ENCODE measurements at regions of chr3 and their contacts with region 1.

Region 1: DNA sequence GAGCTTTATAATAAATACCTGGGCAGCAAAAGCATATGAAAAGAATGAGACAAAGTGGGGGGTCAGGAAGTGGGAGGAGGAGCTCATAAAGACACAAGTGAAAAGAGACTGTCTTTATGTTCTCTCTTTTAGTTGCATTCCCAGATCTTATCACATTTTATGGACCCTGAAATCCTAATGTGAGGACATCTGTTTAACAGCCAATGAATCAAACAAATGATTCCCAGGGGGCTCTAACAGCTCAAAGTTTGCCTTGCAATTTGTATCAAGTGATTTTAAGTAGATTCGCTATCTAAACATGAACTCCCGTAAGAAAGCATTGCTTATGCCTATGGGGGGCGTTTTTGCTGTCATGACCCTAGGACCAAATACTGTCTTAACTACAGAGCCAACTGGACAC is 332.3 kb upstream of the CNTN4 start:
- DNase-seq: no peak
- H3K27ac ChIP-seq: no peak overlapping the region
- CTCF ChIP-seq: no peak

Region 2: GRCh38 chr3:1214933-1215332 is 551.5 kb before region 1 on chr3:
- CTCF ChIA-PET with region 1: no interaction called
- POLR2A ChIA-PET with region 1: interaction called, 12 read pairs
- DNase-seq: no peak
- H3K27ac ChIP-seq: no peak overlapping the region
- CTCF ChIP-seq: no peak

Region 3: GRCh38 chr3:1752205-1752604 is 14.2 kb before region 1 on chr3:
- CTCF ChIA-PET with region 1: no interaction called
- POLR2A ChIA-PET with region 1: no interaction called
- DNase-seq: no peak
- H3K27ac ChIP-seq: no peak overlapping the region
- CTCF ChIP-seq: no peak

Measured in RWPE1 (cell line).